BJ (cell line): ENCODE measurements at regions of chr5 and their contacts with region 1.

Region 1: DNA sequence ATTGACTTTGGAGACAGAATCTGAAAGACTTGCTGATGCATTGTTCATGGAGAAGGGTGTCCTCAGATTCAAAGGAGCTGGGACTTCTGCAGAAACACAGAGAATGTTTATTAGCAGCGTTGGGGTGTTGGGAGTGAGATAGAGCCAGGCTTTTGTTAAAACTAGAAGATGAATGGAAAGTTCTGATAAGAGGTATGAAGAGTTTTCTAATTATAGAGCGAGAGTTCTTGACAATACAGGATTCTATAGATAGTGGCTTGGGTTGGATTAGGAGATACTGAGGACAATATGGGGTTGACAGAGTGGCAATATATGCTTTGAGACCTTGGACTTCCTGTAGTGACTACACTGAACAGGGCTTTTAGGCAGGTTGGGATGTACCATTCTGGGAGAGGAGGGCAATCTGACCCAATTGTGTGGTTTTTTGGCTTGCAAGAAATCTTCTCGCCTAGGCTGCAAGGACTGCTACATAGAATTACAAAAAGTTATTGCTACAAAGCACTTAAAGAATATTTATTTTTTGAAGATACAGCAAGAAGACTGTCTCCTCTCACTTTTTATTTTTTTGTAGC is 83.1 kb downstream of the FER start:
- DNase-seq: no peak
- H3K4me3 ChIP-seq: no peak overlapping the region
- H3K27me3 ChIP-seq: no peaks in the 10 kb centered on the region
- CTCF ChIP-seq: no peak

Region 2: DNA sequence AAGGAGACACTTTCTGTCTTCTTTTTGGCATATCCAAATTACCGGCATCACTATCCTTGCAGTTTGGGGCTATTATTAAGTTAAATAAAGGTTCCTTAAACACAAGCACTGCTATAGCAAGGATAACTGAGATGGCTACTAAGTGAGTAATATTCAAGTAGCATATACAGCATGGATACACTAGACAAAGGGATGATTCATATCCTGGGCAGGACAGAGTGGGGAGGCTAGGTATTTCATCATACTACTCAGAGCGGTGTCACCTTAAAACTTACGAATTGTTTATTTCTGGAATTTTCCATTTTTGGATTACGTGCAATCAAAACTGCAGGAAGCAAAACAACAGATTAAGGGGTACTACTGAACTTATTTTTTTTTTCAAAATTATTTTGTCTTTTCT is 29.0 kb before region 1 on chr5:
- CTCF ChIA-PET with region 1: no interaction called
- POLR2A ChIA-PET with region 1: interaction called, 15 read pairs
- DNase-seq: peak; percentile 72
- H3K4me3 ChIP-seq: no peak overlapping the region
- H3K27me3 ChIP-seq: no peaks in the 10 kb centered on the region
- CTCF ChIP-seq: no peak

Region 3: GRCh38 chr5:108898257-108898656 is 67.5 kb after region 1 on chr5:
- CTCF ChIA-PET with region 1: no interaction called
- POLR2A ChIA-PET with region 1: no interaction called
- DNase-seq: no peak
- H3K4me3 ChIP-seq: no peak overlapping the region
- H3K27me3 ChIP-seq: no peaks in the 10 kb centered on the region
- CTCF ChIP-seq: no peak